ENCODE measurements at regions of chr11 and their contacts with region 1.

Region 1: DNA sequence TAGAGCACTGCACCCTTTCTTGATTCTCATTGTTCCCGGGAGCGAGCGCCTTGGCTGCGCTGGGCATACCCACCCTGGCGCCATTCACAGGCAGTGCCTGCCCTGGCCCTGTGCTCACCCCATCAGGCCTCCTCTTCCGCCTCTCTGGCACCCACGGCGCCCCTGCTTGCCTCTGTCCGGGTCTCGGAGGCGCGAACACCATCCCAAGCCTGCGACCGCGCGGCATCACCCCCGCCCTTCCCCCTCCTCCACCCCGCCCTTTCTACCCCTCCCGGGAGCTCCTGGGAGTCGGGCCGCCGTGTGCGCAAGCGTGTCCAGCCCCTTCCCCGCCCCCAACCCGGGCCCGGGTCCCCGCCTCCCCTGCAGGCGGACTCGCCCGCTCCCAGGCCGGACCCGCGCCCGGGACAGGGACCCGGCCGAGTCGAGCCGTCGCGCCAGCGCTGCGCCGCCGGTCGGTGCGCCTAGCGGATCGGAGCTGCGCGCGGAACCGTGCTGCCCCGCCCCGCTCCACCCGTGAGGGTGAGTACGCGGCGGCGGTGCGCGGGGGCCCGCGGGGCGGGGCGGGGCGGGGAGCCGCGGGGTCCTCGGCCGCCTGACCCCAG is at the start of gene ST3GAL4:
- DNase-seq: peak; percentile 93
- ATAC-seq: peak; percentile 75
- total RNA-seq, gene ST3GAL4: 72.4 TPM

Region 2: GRCh38 chr11:126048198-126048597 is 307.2 kb before region 1 on chr11:
- intact Hi-C with region 1: no loop called
- DNase-seq: no peak
- ATAC-seq: peak; percentile 49

Region 3: DNA sequence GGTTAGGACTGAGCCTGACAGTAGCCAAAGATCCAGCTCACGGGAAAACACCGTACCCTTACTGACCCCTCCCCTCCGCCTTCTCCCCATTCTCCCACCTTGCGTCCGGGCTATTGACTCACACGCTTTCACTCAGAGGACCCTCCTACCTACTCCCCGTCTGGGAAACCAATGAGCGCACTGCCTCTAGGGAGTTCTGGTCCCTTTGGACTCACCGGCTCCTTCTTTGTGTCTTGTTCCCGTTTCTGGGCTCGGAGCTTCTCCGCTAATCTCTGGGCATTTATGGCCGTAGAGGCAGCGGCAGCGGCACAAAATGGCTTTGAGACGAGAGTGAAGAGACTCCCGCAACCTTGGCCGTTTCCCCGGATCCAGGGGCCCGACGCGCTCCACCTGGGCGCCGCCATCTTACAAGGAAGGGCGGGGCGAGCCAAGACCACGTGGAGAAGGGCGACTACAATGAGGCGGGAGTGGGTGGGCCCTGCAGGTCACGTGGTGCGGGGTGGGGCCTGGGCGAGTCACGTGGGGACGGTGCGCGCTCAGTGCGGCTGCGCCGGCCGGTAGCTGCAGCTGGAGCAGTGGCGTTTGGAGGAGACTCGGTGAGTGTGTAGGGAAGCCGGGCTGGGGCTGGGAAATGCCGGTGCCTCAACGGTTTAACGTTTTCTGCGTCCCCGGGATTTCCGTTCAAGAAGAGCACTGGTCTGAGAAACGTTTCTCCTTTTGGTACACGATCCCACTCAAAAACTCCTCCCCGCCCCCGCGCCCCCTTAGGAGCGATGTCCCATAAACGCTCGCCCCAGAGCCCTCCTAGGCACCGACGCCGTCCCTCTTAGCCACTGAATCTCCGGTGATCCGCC is 144.0 kb before region 1 on chr11 and contains the starts of genes FAM118B and RPUSD4:
- intact Hi-C with region 1: no loop called
- DNase-seq: peak; percentile 99
- ATAC-seq: peak; percentile 100
- total RNA-seq, gene FAM118B: 19.4 TPM
- total RNA-seq, gene RPUSD4: 21.0 TPM

Region 4: DNA sequence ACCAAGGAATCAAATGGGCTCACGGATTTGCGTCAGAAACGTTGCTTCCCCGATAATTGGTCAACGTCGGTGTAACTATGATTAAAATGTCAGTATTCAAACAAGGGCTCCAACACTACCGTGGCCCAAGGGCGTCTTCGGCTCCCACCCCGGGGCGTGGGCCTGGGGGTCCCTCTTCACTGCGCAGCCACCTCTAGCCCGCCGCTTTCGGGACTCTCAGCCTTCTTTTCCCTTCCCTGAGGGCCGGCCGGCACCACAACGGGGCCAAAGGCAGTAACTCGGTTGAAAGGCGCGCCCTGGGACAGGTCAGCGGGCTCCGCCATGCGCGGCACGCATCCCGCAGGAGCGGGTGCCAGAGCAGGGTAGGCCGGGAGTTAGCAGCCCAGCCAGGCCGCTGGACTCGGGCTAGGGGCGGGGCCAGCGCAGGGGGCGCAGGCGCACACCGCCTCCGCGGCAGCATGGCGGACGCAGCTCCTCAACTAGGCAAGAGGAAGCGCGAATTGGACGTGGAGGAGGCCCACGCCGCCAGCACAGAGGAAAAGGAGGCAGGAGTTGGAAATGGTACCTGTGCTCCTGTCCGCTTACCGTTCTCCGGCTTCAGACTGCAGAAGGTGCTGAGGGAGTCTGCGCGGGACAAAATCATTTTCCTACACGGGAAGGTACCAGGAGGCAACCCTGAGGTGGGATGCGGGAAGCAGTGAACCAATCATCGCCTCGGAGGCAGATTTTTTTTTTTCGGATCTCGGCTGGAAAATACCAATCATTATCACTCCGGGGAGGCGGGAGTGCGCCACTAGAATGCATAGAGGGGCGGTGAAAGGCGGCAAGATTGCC is 51.6 kb before region 1 on chr11 and contains the start of gene DCPS:
- intact Hi-C with region 1: no loop called
- DNase-seq: peak; percentile 93
- ATAC-seq: peak; percentile 99
- total RNA-seq, gene DCPS: 12.1 TPM

Region 5: DNA sequence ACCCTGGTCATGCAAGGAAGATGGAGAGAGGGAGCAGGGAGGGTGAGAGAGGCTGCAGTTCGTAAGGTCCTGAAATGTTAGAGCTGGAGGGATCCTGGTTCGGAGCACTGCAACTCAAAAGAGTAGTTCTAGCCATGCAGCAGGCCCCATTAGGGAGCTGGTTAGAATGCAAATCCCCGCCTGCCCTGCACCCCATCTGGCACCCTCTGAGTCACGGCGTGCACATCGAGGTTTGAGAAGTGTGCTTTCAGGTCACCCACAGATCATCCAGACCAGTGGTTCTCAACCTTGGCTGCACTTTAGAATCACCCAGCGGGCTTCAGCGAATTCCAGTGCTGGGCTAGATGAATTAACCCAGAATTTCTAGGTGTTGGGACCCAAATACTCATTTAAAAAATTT is 48.2 kb after region 1 on chr11:
- intact Hi-C with region 1: loop called (anchors 10 kb)
- DNase-seq: no peak
- ATAC-seq: peak; percentile 14

Region 6: DNA sequence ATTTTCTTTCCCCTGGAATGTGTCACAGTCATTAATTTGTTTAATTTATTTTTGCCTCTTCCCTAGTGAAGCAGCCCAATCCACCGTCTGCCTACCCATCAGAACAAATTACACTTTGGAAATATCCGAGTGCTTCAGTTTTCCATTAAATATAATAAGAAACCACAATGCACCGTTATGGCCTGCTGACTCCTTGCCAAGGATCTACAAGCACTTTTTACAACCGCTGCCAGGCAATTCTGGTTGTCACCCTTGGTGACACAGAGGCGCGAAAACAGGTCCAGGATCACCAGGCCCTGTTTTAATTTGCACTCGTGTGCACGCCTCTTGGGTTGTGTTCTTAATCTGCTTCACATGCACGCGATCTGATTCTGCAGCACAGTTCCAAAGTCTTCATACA is 601.2 kb after region 1 on chr11:
- intact Hi-C with region 1: no loop called
- DNase-seq: no peak
- ATAC-seq: no peak

Measured in sciatic nerve (tissue), 2 donors.